Sciatic nerve (tissue), 2 donors: ENCODE measurements at regions of chr9 and their contacts with region 1.

Region 1: DNA sequence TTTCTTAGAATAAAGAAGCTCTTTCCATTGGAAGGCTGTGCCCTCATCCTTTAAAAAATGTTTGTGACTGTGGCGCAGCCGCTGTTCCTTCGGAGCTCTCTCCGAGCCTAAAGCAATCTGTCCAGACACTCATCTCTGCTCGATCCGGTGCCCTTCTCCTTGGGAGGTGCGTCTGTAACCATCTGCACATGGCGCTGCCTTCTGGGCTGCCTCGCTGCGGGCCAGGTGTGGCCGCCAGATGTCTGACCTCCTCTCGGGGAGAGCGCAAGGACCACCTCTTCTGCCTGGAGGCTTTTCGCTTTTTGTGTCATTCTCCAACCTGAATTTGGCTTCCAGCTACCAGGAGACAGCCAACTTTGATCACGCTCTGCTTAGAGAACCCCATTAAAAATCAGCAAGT is 153.4 kb upstream of the PTCH1 start:
- DNase-seq: no peak
- ATAC-seq: peak; percentile 85

Region 2: GRCh38 chr9:95336281-95336680 is 333.8 kb before region 1 on chr9:
- intact Hi-C with region 1: no loop called
- DNase-seq: no peak
- ATAC-seq: no peak

Region 3: GRCh38 chr9:95721061-95721531 is 51.0 kb after region 1 on chr9:
- intact Hi-C with region 1: loop called (anchors 2 kb)
- DNase-seq: no peak
- ATAC-seq: no peak